ENCODE measurements at regions of chrX and their contacts with region 1.

Region 1: GRCh38 chrX:154534862-154535670 is 11.6 kb downstream of the G6PD start:
- DNase-seq: peak; percentile 54 to 91
- H3K4me3 ChIP-seq: no peak overlapping the region
- H3K27ac ChIP-seq: no peak overlapping the region
- H3K4me1 ChIP-seq: peaks cover 0 to 3% (median 0%) of the 10 kb centered on the region in 4 experiments; a peak in 2 of 7 replicates
- H3K27me3 ChIP-seq: no peaks in the 10 kb centered on the region
- CTCF ChIP-seq: peak in 2 of 3 experiments; percentile 96 to 100; a peak in 3 of 4 replicates
- EP300 ChIP-seq: no peak
- POLR2A ChIP-seq: no peak
- RAD21 ChIP-seq: peak; percentile 98 to 99

Region 2: DNA sequence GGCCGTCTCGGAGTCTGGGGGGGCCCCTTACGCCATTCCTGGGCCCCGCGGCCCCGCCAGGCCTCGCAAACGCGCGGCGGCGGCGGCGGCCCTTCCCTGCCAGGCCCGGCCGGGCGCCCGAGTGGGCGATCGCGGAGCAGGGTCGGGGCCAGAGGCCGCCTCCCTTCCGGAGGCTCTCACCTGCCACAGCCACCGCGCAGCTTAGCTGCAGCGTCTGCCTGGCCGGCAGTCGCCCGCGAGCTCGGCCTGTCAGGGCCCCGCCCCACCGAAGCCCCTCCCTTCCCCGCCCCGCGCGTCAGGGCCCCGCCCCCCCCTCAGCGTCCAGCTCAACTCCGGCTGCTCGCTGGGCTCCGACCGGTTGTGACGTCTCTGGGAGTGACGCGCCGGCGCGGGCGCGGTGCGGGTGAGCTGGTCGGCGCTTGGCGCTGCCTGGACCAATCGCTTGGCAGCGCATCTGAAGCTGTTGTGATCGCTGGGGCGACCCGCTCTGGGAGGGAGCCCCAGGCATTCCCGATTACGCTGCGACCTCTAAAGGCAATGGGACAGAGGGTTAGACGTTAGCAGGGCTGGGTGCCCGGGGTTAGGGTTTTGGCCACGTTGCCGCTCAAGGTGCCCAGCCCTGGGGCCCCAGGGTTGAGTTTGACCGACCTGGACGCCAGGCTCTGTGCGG is 44.5 kb before region 1 on chrX and contains the start of gene SLC10A3:
- CTCF ChIA-PET with region 1: interaction called, 14 read pairs
- POLR2A ChIA-PET with region 1: interaction called, 3 read pairs
- DNase-seq: peak; percentile 78 to 85
- H3K4me3 ChIP-seq: peak within 1 kb of the TSS; percentile 40 to 66 (median 49)
- H3K27ac ChIP-seq: peak within 1 kb of the TSS; percentile 42; the same call in 1 of the 2 replicates
- H3K4me1 ChIP-seq: peaks cover 0 to 9% (median 3%) of the 10 kb centered on the region in 4 experiments; a peak in 4 of 7 replicates
- H3K27me3 ChIP-seq: no peaks in the 10 kb centered on the region; a peak in 1 of 7 replicates
- CTCF ChIP-seq: no peak
- EP300 ChIP-seq: no peak
- POLR2A ChIP-seq: peak in 1 of 2 experiments; percentile 54; a peak in 2 of 3 replicates
- RAD21 ChIP-seq: peak in 1 of 2 experiments; percentile 23; a peak in 2 of 4 replicates
- total RNA-seq, gene SLC10A3: 6.8 and 8.2 TPM in 2 replicates

Region 3: DNA sequence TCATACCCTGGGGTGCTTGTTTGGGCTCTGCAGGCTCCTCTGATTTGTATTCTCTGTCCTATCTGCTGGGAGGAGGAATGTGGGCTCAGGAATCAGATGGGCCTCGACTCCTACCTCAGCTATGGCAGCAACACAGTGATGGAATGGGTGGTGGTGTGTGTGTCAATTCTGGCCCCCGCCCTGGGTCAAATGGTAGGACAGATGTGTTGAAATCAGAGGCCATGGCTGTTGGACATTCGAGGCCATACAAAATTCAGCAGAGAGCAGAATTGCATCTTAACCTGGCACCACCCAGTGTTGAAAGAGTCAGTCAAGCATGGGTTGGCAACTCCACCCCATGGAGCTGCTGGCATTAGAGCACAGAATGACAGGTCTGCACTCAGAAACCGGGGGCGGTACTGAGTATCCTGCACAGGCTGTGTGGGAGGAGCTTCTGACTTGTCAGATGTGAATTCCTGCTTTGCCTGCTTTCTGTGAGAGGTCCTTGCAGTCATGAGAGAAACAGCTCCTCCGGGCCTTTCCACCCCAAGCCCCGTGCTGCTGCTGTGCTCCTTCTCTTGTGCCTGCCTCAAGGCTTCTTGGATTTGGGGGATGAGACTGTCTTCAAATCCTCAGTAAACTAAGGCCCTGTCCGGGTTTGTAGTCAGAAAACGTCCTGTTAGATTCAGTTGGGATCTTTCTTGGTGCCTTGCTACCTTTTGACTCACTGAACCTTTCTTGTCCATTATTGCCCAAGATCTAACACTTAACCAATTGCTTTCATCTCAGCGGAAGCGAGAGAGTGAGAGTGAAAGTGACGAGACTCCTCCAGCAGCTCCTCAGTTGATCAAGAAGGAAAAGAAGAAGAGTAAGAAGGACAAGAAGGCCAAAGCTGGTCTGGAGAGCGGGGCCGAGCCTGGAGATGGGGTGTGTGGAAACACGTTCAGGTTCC is 240.6 kb after region 1 on chrX:
- CTCF ChIA-PET with region 1: no interaction called
- POLR2A ChIA-PET with region 1: no interaction called
- DNase-seq: no peak
- H3K4me3 ChIP-seq: no peak overlapping the region
- H3K27ac ChIP-seq: no peak overlapping the region
- H3K4me1 ChIP-seq: no peaks in the 10 kb centered on the region
- H3K27me3 ChIP-seq: no peaks in the 10 kb centered on the region
- CTCF ChIP-seq: no peak
- EP300 ChIP-seq: no peak
- POLR2A ChIP-seq: peak in 1 of 2 experiments; percentile 20; a peak in 1 of 3 replicates
- RAD21 ChIP-seq: no peak

Measured in H1 (cell line).